Dorsolateral prefrontal cortex (tissue), 120 donors: ENCODE measurements at regions of chr9 and their contacts with region 1.

Region 1: DNA sequence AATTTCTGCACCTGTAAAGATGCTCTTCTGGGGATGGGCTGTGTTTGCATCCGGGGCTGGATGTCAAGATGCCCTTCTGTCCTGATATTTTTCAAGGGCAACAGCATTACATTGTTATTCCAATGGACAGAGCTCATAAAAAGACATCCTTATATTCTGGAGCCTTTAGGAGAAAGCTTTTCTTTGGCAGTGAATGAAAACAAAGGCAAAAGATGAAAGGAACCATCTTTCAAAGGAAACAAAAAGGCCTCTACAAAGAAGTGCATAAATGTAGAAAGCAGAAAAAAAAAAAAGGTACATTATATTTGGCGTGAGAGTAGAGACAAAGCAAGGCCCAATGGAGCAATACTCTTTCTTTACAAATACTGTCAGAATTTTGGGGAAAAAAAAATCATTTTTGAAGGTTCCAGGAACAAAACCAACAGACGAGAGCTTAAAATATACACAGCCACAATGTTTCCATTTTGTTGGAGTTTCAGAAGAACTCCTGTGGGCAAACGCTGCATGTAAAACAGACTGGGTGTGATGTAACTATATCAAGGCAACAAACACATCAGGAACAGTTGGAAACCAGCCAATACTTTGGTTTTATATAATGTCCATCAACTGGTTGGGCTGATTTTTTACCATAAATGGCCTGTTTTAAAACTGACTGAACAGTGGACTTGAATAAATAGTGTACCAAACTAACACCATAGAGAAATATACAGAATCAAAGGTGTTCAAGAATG is 885.6 kb upstream of the DMAC1 start:
- DNase-seq: no peak
- H3K4me3 ChIP-seq: peak overlapping the region in 2 of 59 donors; percentile 8 to 12
- H3K27ac ChIP-seq: peak overlapping the region in 51 of 59 donors; percentile 2 to 85 (median 44)
- H3K27me3 ChIP-seq: no peaks in the 10 kb centered on the region
- CTCF ChIP-seq: no peak

Region 2: DNA sequence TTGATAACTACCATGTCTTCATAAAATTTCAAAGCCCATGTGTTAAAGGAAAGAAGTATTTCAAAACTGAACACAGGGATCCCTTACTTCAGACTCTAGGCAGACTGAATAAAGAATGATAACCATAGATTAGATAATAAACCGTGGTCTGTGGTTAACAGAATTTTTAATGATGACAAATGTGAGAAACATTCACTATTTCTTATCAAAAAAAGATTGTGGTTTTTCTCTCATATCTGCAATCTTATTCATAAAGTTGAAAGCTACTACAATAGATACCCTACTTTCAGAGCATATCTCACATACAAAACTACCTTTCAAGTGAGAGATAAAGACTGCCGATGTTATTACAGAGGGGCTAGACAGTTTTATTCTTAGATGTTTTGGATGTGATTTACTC is 68.7 kb before region 1 on chr9:
- intact Hi-C with region 1: no loop called
- DNase-seq: no peak
- H3K4me3 ChIP-seq: no peak overlapping the region
- H3K27ac ChIP-seq: peak overlapping the region in 3 of 59 donors; percentile 16 to 37 (median 25)
- H3K27me3 ChIP-seq: no peaks in the 10 kb centered on the region
- CTCF ChIP-seq: no peak

Region 3: DNA sequence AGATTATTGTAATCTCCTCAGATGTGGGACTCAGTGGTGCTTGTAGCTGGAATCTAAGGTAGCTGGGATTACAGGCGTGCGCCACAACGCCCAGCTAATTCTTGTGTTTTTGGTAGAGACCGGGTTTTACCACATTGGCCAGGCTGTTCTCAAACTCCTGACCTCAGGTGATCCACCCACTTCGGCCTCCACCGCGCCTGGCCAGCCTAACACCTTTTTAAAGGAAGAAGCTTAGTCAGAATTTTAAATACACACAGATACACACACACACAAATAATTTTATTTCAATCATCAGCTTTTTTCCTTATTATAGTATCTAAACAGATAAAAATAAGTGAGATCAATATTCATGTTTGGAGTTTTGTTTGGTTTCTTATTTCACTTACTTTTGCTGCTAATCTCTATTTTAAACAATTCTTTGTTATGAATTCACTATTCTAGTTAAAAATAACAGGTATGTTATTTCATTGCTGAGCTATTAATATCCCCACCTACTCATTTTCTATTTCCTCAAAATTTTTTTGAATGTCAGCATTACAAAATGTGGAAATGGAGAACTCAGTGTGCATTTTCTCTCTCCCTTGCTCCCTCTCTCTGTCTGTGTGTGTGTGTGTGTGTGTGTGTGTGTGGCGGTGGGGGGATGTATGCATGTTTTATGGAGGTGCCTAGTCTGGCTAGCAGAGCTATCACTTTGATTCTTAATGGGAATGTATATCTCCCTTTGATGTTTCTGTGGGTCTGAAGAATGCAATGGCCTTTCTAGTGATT is 75.0 kb after region 1 on chr9:
- intact Hi-C with region 1: no loop called
- DNase-seq: no peak
- H3K4me3 ChIP-seq: no peak overlapping the region
- H3K27ac ChIP-seq: peak overlapping the region in 9 of 59 donors; percentile 4 to 42 (median 27)
- H3K27me3 ChIP-seq: no peaks in the 10 kb centered on the region
- CTCF ChIP-seq: no peak

Region 4: GRCh38 chr9:8845376-8845775 is 160.2 kb after region 1 on chr9:
- intact Hi-C with region 1: loop called in 1 of 2 experiments (anchors 10 kb)
- DNase-seq: peak in 8 of 10 donors; percentile 41 to 84 (median 71)
- H3K4me3 ChIP-seq: peak overlapping the region in 28 of 59 donors; percentile 1 to 50 (median 16)
- H3K27ac ChIP-seq: peak overlapping the region; percentile 32 to 99 (median 92)
- H3K27me3 ChIP-seq: no peaks in the 10 kb centered on the region
- CTCF ChIP-seq: peak in 2 of 56 donors; percentile 11 to 15